Mucosa of descending colon (tissue), 3 donors: ENCODE measurements at regions of chr1 and their contacts with region 1.

Region 1: GRCh38 chr1:205658943-205659581 is 21.2 kb downstream of the SLC45A3 start:
- DNase-seq: peak; percentile 81 to 89 (median 88)
- ATAC-seq: peak; percentile 89
- H3K4me3 ChIP-seq: no peak overlapping the region
- H3K4me1 ChIP-seq: no peaks in the 10 kb centered on the region
- CTCF ChIP-seq: peak; percentile 81

Region 2: DNA sequence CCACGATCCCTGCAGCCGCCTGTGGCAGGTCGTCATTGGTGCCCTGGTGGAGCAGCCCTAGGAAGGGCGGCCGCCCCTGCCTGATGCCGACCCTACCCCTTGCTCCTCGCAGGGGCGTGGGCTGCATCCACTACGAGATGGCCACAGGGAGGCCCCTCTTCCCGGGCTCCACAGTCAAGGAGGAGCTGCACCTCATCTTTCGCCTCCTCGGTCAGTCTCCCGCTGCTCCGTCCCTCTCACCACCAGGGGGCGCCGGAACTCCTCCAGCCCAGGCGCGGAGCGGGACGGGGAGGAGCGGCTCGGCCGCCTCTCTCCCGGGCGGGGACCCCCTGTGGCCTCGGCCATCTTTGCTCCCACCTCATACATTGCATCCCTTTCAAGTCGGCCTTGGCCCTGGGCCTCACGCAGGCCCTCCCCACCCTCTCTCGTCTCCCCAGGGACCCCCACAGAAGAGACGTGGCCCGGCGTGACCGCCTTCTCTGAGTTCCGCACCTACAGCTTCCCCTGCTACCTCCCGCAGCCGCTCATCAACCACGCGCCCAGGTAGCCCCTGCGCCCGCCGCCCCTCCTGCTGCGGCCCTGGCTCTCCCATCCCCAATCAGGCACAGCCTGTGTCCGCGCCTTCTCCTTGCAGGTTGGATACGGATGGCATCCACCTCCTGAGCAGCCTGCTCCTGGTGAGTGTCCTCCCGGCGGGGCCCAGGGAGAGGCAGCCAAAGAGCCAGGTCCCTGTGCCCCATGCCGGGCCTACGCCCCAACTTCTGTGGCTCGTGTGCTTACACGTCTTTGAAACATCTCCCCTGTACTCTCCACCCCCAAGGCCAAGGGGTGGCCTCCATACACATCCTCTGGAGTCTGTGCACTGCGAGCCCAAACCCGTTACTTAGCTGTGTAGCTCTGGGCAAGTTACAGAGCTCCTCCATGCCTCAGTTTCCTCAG is 129.9 kb before region 1 on chr1:
- intact Hi-C with region 1: loop called in 1 of 2 experiments (anchors 5 kb)
- DNase-seq: peak; percentile 81 to 91 (median 89)
- ATAC-seq: peak; percentile 85
- H3K4me3 ChIP-seq: no peak overlapping the region
- H3K4me1 ChIP-seq: no peaks in the 10 kb centered on the region
- CTCF ChIP-seq: peak; percentile 84

Region 3: GRCh38 chr1:205591522-205592351 is 67.3 kb before region 1 on chr1:
- intact Hi-C with region 1: loop called in 1 of 2 experiments (anchors 5 kb)
- DNase-seq: peak; percentile 89 to 97 (median 95)
- ATAC-seq: peak; percentile 94
- H3K4me3 ChIP-seq: no peak overlapping the region
- H3K4me1 ChIP-seq: peaks cover 22% of the 10 kb centered on the region
- CTCF ChIP-seq: peak; percentile 97

Region 4: DNA sequence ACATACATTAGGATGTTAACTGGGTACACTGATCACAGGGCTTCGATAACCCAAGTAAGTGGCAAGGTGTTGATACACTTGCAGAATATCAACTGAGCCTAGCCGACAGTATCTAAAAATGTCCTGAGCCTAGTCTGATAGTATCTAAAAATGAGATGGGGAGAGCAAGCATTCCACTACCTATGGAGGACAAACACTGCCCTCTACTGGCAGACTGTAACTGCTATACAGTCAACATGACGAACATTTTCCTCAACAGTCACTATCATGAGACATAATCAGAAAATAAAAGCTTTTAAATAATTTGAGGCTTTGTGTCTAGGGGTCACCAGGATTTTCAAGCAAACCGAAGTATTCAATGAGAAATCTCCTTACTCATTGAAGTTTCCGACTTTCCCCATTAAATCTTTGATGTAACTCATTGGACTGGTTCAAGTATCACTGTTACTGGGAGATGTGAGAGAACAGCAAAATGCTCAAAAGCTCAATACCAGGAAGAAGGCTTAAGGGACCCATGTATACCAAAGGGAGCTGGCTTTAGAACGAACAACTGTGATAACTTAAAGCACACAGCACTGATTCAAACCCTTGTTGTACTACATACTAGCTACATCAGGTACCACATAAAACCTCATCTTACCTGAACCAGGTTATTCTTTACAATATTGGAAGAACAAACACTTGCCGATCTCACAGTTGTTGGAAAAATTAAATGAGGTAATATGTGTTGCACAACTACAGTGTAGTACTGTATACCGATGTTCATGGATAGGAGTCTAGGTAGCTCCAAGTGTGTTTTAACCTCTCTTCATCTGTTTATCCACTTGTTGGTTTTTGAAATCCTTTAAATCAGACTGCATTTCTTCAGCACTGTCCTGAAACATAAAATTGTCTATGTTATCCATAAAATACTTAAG is 52.3 kb after region 1 on chr1:
- intact Hi-C with region 1: loop called in 1 of 2 experiments (anchors 5 kb)
- DNase-seq: peak in 1 of 3 donors; percentile 97
- ATAC-seq: peak; percentile 90
- H3K4me3 ChIP-seq: no peak overlapping the region
- H3K4me1 ChIP-seq: no peaks in the 10 kb centered on the region
- CTCF ChIP-seq: peak; percentile 58